ENCODE measurements at regions of chr5 and their contacts with region 1.

Region 1: GRCh38 chr5:33969572-33970452 is 14.7 kb downstream of the SLC45A2 start:
- DNase-seq: peak; percentile 30
- ATAC-seq: peak; percentile 72
- H3K4me3 Mint-ChIP-seq: no peak overlapping the region
- H3K27ac Mint-ChIP-seq: no peak overlapping the region
- H3K4me1 Mint-ChIP-seq: peaks cover 15% of the 10 kb centered on the region
- H3K27me3 Mint-ChIP-seq: no peaks in the 10 kb centered on the region

Region 2: DNA sequence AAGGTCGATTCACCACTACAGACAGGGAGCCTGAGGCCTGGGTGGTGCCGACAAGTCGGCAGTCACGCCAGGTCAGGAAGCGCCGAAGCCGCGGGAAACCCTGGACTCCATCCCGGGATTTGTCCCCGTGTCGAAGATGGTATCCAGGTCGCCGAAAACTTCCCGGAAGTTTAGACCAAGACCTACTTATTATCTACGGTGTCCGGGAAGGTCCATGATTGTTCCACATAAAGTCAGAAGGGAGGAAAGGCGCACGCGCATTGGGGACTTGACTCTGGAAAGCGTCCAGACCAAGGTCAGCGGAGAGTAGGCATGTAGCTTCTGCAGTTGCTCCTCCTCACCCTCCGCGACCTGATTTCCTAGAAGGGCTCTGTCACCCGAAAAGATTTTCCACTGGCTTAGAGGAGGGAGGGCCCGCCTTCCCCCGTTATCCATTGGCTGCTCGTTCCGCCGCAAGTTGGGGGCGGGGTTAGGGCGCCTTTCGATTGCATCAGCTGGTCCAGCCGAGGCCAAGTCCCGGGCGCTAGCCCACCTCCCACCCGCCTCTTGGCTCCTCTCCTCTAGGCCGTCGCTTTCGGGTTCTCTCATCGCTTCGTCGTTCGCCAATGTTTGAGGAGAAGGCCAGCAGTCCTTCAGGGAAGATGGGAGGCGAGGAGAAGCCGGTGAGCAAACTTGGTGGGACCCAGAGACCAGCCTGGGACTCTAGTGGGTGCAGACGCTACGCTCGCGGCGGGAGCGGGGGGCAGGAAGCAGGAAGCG is 529.2 kb before region 1 on chr5 and contains the start of gene TARS1:
- CTCF ChIA-PET with region 1: interaction called, 13 read pairs
- POLR2A ChIA-PET with region 1: no interaction called
- DNase-seq: peak; percentile 97
- ATAC-seq: peak; percentile 98
- H3K4me3 Mint-ChIP-seq: no peak within 1 kb of the TSS
- H3K27ac Mint-ChIP-seq: no peak within 1 kb of the TSS
- H3K4me1 Mint-ChIP-seq: peaks cover 34% of the 10 kb centered on the region
- H3K27me3 Mint-ChIP-seq: no peaks in the 10 kb centered on the region
- total RNA-seq, gene TARS1: 180 to 189 TPM

Region 3: DNA sequence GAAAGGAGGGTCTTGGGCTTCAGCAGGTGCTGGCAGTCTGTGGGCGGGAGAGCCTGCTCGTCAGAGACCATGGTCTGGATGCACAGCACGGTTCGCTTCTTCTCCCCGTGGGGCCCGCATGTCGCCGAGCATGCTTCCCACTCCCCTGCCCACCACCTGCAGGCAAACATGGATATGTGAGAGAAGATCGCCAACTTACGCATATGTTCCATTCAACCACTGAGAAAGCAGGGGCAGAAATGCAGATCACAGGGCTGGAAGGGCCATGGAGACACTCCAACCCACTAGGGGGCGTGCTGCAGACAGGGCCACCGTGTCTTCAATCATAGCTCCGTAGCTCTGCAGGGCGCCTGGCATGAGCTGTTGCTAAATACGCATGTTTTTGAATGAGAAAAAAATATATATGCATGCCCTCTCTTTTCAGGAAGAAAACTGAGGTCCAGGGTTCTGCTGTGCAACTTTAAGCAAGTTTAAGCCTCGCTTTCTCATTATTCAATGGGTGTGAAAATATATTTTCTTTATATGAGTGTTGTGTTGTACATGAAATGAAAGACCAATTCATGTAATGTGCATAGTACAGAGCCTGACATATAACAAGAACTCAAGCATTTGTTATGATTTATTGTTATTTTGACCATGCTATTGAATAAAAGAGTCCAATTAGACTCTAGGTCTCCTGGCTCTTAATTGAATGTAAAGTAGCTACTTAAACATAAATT is 381.0 kb before region 1 on chr5:
- CTCF ChIA-PET with region 1: interaction called, 17 read pairs
- POLR2A ChIA-PET with region 1: no interaction called
- DNase-seq: peak; percentile 50
- ATAC-seq: peak; percentile 44
- H3K4me3 Mint-ChIP-seq: no peak overlapping the region
- H3K27ac Mint-ChIP-seq: no peak overlapping the region
- H3K4me1 Mint-ChIP-seq: no peaks in the 10 kb centered on the region
- H3K27me3 Mint-ChIP-seq: peaks cover 3% of the 10 kb centered on the region

Region 4: GRCh38 chr5:33936004-33936380 is 33.8 kb before region 1 on chr5:
- CTCF ChIA-PET with region 1: interaction called, 25 read pairs
- POLR2A ChIA-PET with region 1: no interaction called
- DNase-seq: peak; percentile 65
- ATAC-seq: peak; percentile 82
- H3K4me3 Mint-ChIP-seq: no peak overlapping the region
- H3K27ac Mint-ChIP-seq: no peak overlapping the region
- H3K4me1 Mint-ChIP-seq: no peaks in the 10 kb centered on the region
- H3K27me3 Mint-ChIP-seq: peaks cover 53% of the 10 kb centered on the region

Region 5: GRCh38 chr5:33981408-33982162 is 11.8 kb after region 1 on chr5:
- CTCF ChIA-PET with region 1: interaction called, 13 read pairs
- POLR2A ChIA-PET with region 1: no interaction called
- DNase-seq: no peak
- ATAC-seq: no peak
- H3K4me3 Mint-ChIP-seq: no peak overlapping the region
- H3K27ac Mint-ChIP-seq: no peak overlapping the region
- H3K4me1 Mint-ChIP-seq: no peaks in the 10 kb centered on the region
- H3K27me3 Mint-ChIP-seq: no peaks in the 10 kb centered on the region

Region 6: GRCh38 chr5:33997331-33997983 is 27.6 kb after region 1 on chr5:
- CTCF ChIA-PET with region 1: interaction called, 23 read pairs
- POLR2A ChIA-PET with region 1: no interaction called
- DNase-seq: peak; percentile 55
- ATAC-seq: peak; percentile 67
- H3K4me3 Mint-ChIP-seq: no peak overlapping the region
- H3K27ac Mint-ChIP-seq: no peak overlapping the region
- H3K4me1 Mint-ChIP-seq: peaks cover 28% of the 10 kb centered on the region
- H3K27me3 Mint-ChIP-seq: no peaks in the 10 kb centered on the region

Region 7: GRCh38 chr5:34026089-34026761 is 56.4 kb after region 1 on chr5:
- CTCF ChIA-PET with region 1: no interaction called
- POLR2A ChIA-PET with region 1: no interaction called
- DNase-seq: no peak
- ATAC-seq: no peak
- H3K4me3 Mint-ChIP-seq: no peak overlapping the region
- H3K27ac Mint-ChIP-seq: no peak overlapping the region
- H3K4me1 Mint-ChIP-seq: peaks cover 21% of the 10 kb centered on the region
- H3K27me3 Mint-ChIP-seq: no peaks in the 10 kb centered on the region

Region 8: GRCh38 chr5:34487159-34487879 is 517.5 kb after region 1 on chr5:
- CTCF ChIA-PET with region 1: no interaction called
- POLR2A ChIA-PET with region 1: no interaction called
- DNase-seq: no peak
- ATAC-seq: no peak
- H3K4me3 Mint-ChIP-seq: no peak overlapping the region
- H3K27ac Mint-ChIP-seq: no peak overlapping the region
- H3K4me1 Mint-ChIP-seq: no peaks in the 10 kb centered on the region
- H3K27me3 Mint-ChIP-seq: peaks cover 13% of the 10 kb centered on the region

Measured in activated CD8-positive, alpha-beta T cell treated with anti-CD3 and anti-CD28 coated beads, Interleukin-2, amount 10 ng/mL, durations not matched to agents 7 days and 5 days (primary cell).